Colonic mucosa (tissue), 4 donors: ENCODE measurements at regions of chr19 and their contacts with region 1.

Region 1: GRCh38 chr19:10269333-10270179 is 1.4 kb upstream of the ICAM1 start:
- DNase-seq: peak; percentile 92
- H3K4me3 ChIP-seq: peak overlapping the region; percentile 37
- H3K27ac ChIP-seq: peak overlapping the region; percentile 81
- H3K4me1 ChIP-seq: peaks cover 3% of the 10 kb centered on the region
- H3K27me3 ChIP-seq: no peaks in the 10 kb centered on the region
- CTCF ChIP-seq: peak; percentile 88

Region 2: DNA sequence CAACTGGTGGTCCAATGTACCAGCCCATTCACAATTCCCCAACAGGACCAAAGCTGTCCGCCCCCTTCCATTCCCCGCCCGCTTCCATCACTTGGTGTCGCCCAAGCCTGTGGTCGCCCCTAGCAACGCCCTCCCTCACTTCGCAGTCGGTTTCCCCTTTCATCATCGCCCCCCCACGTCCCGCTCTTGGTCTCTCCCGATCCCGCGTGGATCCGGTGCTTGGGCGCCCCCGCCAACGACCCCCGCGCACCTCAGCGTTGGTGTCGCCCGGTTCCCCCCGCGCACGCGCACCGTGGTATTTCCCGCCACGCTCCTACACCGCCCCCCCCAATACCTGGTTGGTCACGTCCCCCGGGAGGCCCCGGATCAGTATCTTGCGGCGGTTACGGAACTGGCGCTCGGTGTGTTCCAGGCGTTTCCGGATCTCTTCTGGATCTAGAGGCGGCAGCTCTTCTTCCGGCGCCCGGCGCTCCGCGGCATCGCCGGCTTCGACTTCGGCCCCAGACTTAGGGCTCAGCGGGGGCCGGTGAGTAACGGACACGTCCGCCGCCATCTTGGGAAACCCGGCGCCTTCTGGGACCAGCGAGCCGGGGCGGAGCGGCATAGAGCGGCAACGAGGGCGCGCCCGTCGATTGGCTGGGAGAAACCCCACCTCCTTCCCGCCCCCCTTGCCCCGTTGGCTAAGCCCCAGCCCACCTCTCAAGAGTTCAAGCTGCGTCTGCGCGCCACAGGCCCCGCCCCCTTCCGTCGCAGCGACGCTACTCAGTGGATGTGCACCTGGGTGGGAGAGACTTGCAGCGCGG is 63.6 kb after region 1 on chr19 and contains the start of gene RAVER1:
- intact Hi-C with region 1: loop called (anchors 5 kb)
- DNase-seq: peak; percentile 98
- H3K4me3 ChIP-seq: peak within 1 kb of the TSS; percentile 85
- H3K27ac ChIP-seq: peak within 1 kb of the TSS; percentile 84
- H3K4me1 ChIP-seq: peaks cover 8% of the 10 kb centered on the region
- H3K27me3 ChIP-seq: no peaks in the 10 kb centered on the region
- CTCF ChIP-seq: no peak
- total RNA-seq, gene RAVER1: 67.1 to 101 TPM

Region 3: GRCh38 chr19:10390652-10391286 is 121.2 kb after region 1 on chr19:
- intact Hi-C with region 1: loop called (anchors 1 kb)
- DNase-seq: peak; percentile 80
- H3K4me3 ChIP-seq: no peak overlapping the region
- H3K27ac ChIP-seq: no peak overlapping the region
- H3K4me1 ChIP-seq: no peaks in the 10 kb centered on the region
- H3K27me3 ChIP-seq: no peaks in the 10 kb centered on the region
- CTCF ChIP-seq: peak; percentile 67